Gastrocnemius medialis (tissue), 4 donors: ENCODE measurements at regions of chr7 and their contacts with region 1.

Region 1: GRCh38 chr7:66591799-66592596 is 36.7 kb upstream of the KCTD7 start:
- DNase-seq: peak; percentile 88 to 92
- ATAC-seq: peak; percentile 97
- H3K4me3 ChIP-seq: peak overlapping the region; percentile 70 to 94 (median 88)
- H3K27ac ChIP-seq: peak overlapping the region; percentile 95 to 98 (median 96)
- H3K4me1 ChIP-seq: peaks cover 30 to 33% of the 10 kb centered on the region in 2 donors
- H3K27me3 ChIP-seq: no peaks in the 10 kb centered on the region
- CTCF ChIP-seq: no peak
- POLR2A ChIP-seq: peak; percentile 97 to 98

Region 2: DNA sequence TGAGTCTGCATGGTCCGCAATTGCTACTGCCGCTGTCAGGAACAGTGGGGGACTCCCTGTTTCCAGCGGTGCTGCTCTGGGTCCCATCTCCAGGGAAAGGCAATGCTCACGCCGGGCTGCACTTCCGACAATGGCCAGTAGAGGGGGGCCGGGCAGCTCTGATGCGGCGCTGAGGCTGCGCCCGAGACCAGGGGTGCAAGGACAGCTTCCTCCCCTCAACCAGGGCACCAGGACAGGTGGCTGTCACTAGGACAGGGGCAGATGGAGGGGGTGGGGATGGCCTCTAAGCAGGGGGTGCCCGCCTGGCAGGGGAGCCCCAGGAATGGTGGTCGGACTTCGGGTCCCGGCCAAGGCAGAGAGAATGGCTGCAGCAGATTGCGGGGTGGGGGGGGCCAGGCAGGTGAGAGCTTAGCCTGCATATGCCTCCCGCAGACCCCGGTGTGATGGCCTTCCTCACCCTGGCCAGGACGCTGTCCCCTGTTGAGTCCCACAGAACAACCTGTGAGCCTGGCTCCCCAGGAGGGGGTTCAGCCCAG is 34.3 kb before region 1 on chr7:
- in situ Hi-C with region 1: no loop called
- intact Hi-C with region 1: loop called (anchors 1 kb)
- DNase-seq: peak; percentile 27 to 55
- ATAC-seq: peak; percentile 64 to 73
- H3K4me3 ChIP-seq: no peak overlapping the region
- H3K27ac ChIP-seq: no peak overlapping the region
- H3K4me1 ChIP-seq: peaks cover 0 to 7% of the 10 kb centered on the region in 2 donors
- H3K27me3 ChIP-seq: no peaks in the 10 kb centered on the region
- CTCF ChIP-seq: peak; percentile 87 to 97 (median 91)
- POLR2A ChIP-seq: no peak